ENCODE measurements at regions of chr20 and their contacts with region 1.

Region 1: DNA sequence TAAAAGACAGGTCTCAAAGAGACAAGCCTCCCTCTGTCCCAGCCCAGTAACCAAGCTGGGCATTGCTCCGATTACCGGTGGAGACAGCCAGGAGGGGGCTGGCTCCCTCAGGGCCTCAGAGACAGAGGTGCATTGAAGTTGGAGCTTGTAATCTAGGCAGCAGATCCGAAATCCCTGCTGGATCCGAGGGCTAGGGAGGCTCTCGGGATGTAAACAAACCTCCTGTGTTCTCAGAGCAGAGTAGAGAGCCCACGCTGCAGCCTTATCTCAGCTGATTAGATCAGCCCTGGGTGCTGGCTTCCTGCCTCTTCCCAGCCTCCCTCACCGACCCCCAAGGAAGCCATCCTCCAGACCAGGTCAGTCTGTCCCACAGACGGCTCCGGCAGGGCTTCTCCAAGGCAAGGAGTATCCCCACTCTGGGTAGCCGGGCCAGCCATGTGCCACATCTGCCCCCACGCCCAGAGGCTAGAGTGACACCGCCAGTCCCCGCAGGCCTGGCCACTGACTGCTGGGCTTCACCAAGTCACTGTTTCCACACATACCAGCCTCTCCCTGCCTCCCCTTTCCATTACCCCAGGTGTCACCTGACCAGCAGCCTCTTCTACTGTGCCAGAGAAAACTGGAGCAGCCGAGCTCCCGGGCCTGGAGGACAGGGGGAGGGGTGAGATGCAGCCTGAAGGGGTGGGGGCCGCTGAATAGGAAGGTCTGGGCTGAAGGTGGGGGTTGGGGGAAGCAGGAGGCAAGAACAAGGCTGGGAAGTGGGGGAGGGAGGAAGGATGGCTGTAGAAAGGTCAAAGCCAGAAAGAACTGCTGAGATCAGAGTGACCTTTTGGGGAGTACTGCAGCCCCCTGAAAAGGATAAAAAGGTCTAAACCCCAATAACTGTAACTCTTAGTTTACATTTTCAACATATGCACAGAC is 6.0 kb downstream of the SDC4 start:
- DNase-seq: peak; percentile 68
- ATAC-seq: peak; percentile 68

Region 2: GRCh38 chr20:45223136-45223535 is 119.1 kb before region 1 on chr20:
- intact Hi-C with region 1: no loop called
- DNase-seq: no peak
- ATAC-seq: no peak

Region 3: DNA sequence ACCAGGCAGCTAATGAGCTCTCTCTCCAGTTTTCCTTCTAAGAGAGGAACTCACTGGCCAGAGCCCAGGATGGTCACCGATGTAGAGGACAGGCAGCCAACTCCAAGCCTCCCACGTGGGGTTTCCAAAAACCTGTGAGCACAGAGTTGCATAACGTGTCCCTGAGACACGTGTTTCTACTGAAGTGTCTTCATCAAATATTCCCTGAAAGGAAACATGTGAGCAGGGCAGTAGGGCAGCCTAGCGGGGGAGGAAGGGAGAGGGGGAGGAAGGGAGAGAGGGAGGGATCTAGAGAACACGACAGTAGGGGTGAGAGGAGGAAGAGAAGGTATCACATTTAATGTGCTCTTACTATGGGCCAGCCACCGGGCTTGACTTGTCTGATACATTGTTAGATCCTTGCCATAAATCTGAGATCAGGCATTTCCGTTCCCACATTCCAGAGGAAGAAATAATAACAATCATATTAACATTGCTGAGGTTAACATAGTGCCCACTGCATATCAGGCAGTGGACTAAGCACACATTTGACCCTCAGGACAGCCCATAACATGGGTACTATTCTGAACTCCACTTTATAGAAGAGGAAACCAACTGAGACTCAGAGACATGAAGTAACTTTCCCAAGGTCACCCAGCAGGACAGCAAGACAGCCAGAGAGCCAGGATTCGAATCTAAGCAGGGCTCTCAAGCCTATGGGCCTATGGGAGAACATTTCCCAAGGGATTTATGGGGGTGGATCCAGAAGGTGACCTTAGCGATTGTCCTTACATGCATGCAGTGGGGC is 16.3 kb after region 1 on chr20:
- intact Hi-C with region 1: loop called (anchors 2 kb)
- DNase-seq: peak; percentile 80
- ATAC-seq: peak; percentile 70

Measured in Right ventricle myocardium superior (tissue), 1 donor.